ENCODE measurements at regions of chr1 and their contacts with region 1.

Region 1: GRCh38 chr1:29259802-29260441 is 23.6 kb downstream of the PTPRU start:
- DNase-seq: peak; percentile 77
- ATAC-seq: peak; percentile 47
- H3K4me3 Mint-ChIP-seq: peak overlapping the region; percentile 86
- H3K27ac Mint-ChIP-seq: no peak overlapping the region
- H3K4me1 Mint-ChIP-seq: peaks cover 47% of the 10 kb centered on the region
- H3K27me3 Mint-ChIP-seq: peaks cover 37% of the 10 kb centered on the region
- CTCF ChIP-seq: no peak

Region 2: DNA sequence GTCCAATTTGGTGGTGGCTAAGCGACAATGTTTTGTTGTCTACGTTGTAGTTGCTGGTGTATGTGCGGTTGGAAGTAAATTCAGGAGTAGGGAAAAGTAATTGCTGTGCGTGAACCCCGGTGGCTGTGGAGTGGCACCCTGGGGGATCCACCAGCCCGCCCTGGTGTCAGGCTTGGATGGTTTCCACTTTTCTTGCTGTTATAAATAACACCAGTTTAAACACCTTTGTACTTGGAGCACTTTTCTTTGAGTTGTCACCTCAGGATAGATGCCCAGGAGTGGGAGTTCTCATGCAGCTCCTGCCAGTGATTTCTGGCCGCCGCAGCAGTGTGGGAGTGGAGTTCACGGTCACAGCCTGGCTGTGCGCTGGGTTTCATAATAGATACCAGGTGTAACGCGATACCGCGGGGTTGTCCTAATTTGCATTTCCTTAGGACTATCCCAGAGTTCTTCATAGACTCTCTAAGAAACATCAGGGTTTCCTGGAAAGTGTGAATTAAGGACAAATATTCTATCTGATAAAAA is 123.5 kb before region 1 on chr1:
- CTCF ChIA-PET with region 1: no interaction called
- POLR2A ChIA-PET with region 1: no interaction called
- DNase-seq: no peak
- ATAC-seq: peak; percentile 63
- H3K4me3 Mint-ChIP-seq: no peak overlapping the region
- H3K27ac Mint-ChIP-seq: no peak overlapping the region; the same call in 1 of the 2 replicates
- H3K4me1 Mint-ChIP-seq: peaks cover 13% of the 10 kb centered on the region
- H3K27me3 Mint-ChIP-seq: no peaks in the 10 kb centered on the region
- CTCF ChIP-seq: no peak

Region 3: GRCh38 chr1:29237669-29238619 is 22.0 kb before region 1 on chr1:
- CTCF ChIA-PET with region 1: interaction called, 30 read pairs
- POLR2A ChIA-PET with region 1: interaction called, 9 read pairs
- DNase-seq: peak; percentile 68
- ATAC-seq: peak; percentile 5
- H3K4me3 Mint-ChIP-seq: peak overlapping the region; percentile 85
- H3K27ac Mint-ChIP-seq: no peak overlapping the region
- H3K4me1 Mint-ChIP-seq: peaks cover 37% of the 10 kb centered on the region
- H3K27me3 Mint-ChIP-seq: peaks cover 56% of the 10 kb centered on the region
- CTCF ChIP-seq: no peak

Region 4: DNA sequence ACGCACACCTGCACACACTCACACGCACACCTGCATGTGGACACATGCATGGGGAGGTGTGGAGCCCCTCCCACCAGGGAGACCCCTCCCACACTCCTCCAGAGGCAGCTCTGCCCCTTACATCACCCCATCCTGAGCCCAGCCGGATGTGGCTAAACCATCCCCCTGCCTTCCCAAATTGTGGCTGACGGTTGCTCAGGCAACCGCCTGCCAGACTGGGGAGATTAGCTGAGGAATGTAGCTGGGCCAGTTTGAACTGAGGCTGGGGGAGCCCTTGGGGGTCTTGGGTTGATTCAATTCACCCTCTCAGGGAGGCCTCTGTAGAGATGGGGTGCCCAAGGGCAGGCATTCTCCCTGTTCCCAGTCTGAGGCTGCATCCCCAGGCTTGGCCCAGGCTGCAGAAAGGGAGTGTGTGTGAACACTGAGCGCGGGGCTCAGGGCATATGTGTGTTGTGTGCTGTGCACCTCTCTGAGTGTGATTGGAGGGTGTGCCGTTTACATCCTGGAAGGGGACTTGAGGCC is 10.7 kb before region 1 on chr1:
- CTCF ChIA-PET with region 1: interaction called, 14 read pairs
- POLR2A ChIA-PET with region 1: interaction called, 6 read pairs
- DNase-seq: peak; percentile 89
- ATAC-seq: peak; percentile 94
- H3K4me3 Mint-ChIP-seq: peak overlapping the region; percentile 46
- H3K27ac Mint-ChIP-seq: peak overlapping the region; percentile 96
- H3K4me1 Mint-ChIP-seq: peaks cover 42% of the 10 kb centered on the region
- H3K27me3 Mint-ChIP-seq: no peaks in the 10 kb centered on the region; the same call in 1 of the 2 replicates
- CTCF ChIP-seq: no peak

Region 5: DNA sequence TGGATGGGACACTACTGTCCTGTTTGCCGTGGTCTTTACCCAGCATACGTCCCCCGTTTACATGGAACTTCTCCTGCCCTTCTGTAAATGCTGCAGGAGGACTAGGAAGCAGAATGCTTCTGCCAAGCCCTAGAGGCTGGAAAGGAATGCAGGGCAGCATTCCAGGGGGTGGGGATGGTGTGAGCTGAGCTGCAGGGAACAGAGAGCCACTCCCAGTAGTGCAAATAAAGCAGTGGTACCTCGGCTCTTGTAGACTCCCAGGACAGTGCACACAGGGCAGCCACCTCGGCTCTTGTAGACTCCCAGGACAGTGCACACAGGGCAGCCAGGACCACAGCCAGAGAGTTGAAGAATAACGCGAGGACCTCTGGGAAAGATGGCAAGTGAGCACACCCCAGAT is 11.8 kb after region 1 on chr1:
- CTCF ChIA-PET with region 1: interaction called, 13 read pairs
- POLR2A ChIA-PET with region 1: interaction called, 3 read pairs
- DNase-seq: peak; percentile 79
- ATAC-seq: peak; percentile 99
- H3K4me3 Mint-ChIP-seq: peak overlapping the region; percentile 48
- H3K27ac Mint-ChIP-seq: peak overlapping the region; percentile 87
- H3K4me1 Mint-ChIP-seq: peaks cover 24% of the 10 kb centered on the region
- H3K27me3 Mint-ChIP-seq: no peaks in the 10 kb centered on the region
- CTCF ChIP-seq: no peak

Region 6: GRCh38 chr1:29282924-29283811 is 23.2 kb after region 1 on chr1:
- CTCF ChIA-PET with region 1: interaction called, 10 read pairs
- POLR2A ChIA-PET with region 1: interaction called, 5 read pairs
- DNase-seq: peak; percentile 98
- ATAC-seq: peak; percentile 92
- H3K4me3 Mint-ChIP-seq: peak overlapping the region; percentile 80
- H3K27ac Mint-ChIP-seq: peak overlapping the region; percentile 99
- H3K4me1 Mint-ChIP-seq: peaks cover 24% of the 10 kb centered on the region
- H3K27me3 Mint-ChIP-seq: no peaks in the 10 kb centered on the region
- CTCF ChIP-seq: no peak

Region 7: DNA sequence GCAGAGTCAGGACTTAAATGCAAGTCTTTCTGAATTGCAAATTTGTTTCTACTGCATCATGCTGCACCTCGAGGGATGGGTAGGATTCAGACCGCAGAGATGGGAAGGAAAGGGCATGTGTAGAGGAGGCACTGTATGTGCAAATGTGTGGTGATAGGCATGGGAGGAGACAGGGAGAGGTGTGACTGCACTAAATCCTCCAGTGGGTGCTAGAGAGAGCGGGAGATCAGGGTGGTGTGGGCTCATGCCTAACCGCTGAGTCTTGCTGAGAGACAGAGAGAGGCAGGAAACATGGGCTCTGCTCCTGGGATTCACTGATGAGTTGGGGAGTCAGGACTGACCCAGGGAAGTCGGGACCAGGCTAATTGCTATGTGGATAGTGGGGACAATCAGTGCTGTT is 37.5 kb after region 1 on chr1:
- CTCF ChIA-PET with region 1: no interaction called
- POLR2A ChIA-PET with region 1: no interaction called
- DNase-seq: no peak
- ATAC-seq: peak; percentile 52
- H3K4me3 Mint-ChIP-seq: no peak overlapping the region
- H3K27ac Mint-ChIP-seq: peak overlapping the region; percentile 82; the same call in 1 of the 2 replicates
- H3K4me1 Mint-ChIP-seq: peaks cover 11% of the 10 kb centered on the region
- H3K27me3 Mint-ChIP-seq: no peaks in the 10 kb centered on the region
- CTCF ChIP-seq: no peak

Region 8: DNA sequence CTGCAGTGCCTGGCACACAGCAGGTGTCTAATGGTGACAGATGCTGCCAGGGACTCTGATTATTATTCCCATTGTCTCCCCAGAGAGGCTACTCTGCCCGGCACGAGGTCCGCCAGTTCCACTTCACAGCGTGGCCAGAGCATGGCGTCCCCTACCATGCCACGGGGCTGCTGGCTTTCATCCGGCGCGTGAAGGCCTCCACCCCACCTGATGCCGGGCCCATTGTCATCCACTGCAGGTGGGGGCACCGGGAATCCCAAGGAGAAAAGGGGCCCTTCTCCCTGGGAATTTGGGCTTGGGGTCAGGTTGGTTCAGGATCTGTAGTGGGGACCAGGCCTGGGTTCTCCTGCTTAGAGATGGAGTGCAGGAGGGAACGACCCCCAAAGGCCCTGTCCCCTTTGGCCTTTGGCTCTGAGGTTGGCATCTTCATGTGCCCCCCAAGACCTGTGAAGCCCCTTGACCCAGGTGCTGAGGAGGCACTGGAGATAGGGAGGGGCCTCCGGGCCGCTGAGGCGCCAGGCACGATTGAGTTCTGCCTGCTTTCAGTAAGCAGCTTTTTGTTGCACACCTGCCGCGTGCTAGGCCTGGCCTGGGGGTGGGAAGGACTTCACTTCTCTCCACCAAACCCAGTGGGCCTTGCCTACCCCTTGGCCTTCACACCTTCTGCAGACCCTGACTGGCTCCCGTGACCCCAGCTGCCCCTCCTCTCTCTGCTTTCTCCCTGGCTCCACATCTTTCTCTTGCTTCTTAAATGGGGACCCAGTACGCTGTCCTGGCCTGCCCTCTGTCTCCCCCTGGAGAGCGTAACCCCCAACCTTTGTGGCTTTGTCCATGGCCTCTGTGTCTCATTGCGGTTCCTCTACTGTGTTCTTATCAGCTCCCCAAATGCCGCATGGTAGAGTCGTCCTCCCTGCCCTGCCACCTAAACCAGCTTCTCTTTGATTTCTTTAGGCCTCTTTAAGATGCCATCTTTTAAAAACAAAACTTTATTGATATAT is 52.8 kb after region 1 on chr1:
- CTCF ChIA-PET with region 1: interaction called, 10 read pairs
- POLR2A ChIA-PET with region 1: no interaction called
- DNase-seq: peak; percentile 56
- ATAC-seq: peak; percentile 91
- H3K4me3 Mint-ChIP-seq: no peak overlapping the region
- H3K27ac Mint-ChIP-seq: 0 out of 2 replicates have a peak overlapping the region, but pooled peaks have one; percentile 30
- H3K4me1 Mint-ChIP-seq: peaks cover 9% of the 10 kb centered on the region
- H3K27me3 Mint-ChIP-seq: no peaks in the 10 kb centered on the region; the same call in 1 of the 2 replicates
- CTCF ChIP-seq: no peak

Region 9: GRCh38 chr1:29324771-29325668 is 65.1 kb after region 1 on chr1:
- CTCF ChIA-PET with region 1: interaction called, 16 read pairs
- POLR2A ChIA-PET with region 1: no interaction called
- DNase-seq: peak; percentile 99
- ATAC-seq: peak; percentile 97
- H3K4me3 Mint-ChIP-seq: peak overlapping the region; percentile 64
- H3K27ac Mint-ChIP-seq: peak overlapping the region; percentile 36
- H3K4me1 Mint-ChIP-seq: peaks cover 17% of the 10 kb centered on the region
- H3K27me3 Mint-ChIP-seq: no peaks in the 10 kb centered on the region
- CTCF ChIP-seq: no peak

Region 10: GRCh38 chr1:29368936-29369932 is 109.3 kb after region 1 on chr1:
- CTCF ChIA-PET with region 1: no interaction called
- POLR2A ChIA-PET with region 1: no interaction called
- DNase-seq: no peak
- ATAC-seq: no peak
- H3K4me3 Mint-ChIP-seq: no peak overlapping the region
- H3K27ac Mint-ChIP-seq: no peak overlapping the region
- H3K4me1 Mint-ChIP-seq: no peaks in the 10 kb centered on the region
- H3K27me3 Mint-ChIP-seq: peaks cover 4% of the 10 kb centered on the region
- CTCF ChIP-seq: no peak

Measured in WTC11 (cell line).